AG04450 (cell line): ENCODE measurements at regions of chr20 and their contacts with region 1.

Region 1: GRCh38 chr20:17938871-17939619 is 29.5 kb downstream of the SNX5 start:
- DNase-seq: no peak
- H3K4me3 ChIP-seq: no peak overlapping the region
- H3K27ac ChIP-seq: peak overlapping the region; percentile 21
- H3K27me3 ChIP-seq: no peaks in the 10 kb centered on the region
- CTCF ChIP-seq: peak; percentile 98

Region 2: GRCh38 chr20:17298171-17298570 is 640.9 kb before region 1 on chr20:
- CTCF ChIA-PET with region 1: no interaction called
- POLR2A ChIA-PET with region 1: no interaction called
- DNase-seq: no peak
- H3K4me3 ChIP-seq: no peak overlapping the region
- H3K27ac ChIP-seq: no peak overlapping the region
- H3K27me3 ChIP-seq: no peaks in the 10 kb centered on the region
- CTCF ChIP-seq: no peak

Region 3: DNA sequence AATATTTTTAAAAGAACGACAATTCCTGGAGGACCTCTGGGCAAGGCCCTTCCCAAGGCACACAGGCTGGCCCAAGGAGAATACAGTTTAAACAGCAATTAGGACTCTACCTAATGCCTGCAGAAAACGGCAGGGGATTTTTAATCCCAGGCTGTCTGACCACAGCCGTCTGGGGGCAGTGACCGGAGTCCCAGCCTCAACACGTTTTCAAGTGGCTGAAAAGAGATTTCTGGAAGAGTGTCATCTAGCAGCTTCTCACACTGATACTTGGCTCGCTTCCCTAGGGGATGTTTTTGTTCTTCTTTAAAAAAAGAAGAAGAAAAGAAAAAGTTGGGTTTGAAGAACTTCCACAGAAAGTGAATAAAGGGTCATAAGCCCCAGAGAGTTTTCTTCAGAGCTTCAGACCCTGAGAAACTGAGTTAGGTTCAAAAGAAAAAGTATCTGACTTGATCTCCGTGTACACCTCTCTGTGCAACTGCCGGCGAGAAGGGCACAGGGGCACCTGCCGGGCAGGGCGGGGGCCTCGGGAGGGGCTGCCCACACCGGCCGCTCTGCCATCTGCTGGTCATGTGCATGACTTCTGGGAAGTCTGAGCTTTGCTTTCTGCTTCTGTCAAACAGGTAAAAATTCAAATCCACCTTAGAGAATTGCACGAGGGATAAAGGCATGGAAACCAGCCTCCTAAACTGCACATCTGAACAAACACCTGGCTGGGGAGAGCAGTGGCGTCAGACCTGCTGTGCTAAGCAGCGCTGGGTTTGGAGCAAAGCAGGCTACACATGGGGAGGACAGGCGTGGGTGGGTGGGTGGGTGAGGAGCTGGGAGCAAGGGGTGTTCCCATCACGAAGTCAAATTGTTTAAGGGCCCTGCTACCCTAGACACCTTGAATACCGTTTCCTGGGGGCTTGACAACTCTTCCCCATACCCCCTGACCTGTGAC is 290.0 kb before region 1 on chr20:
- CTCF ChIA-PET with region 1: interaction called, 15 read pairs
- POLR2A ChIA-PET with region 1: interaction called, 4 read pairs
- DNase-seq: no peak
- H3K4me3 ChIP-seq: no peak overlapping the region
- H3K27ac ChIP-seq: no peak overlapping the region
- H3K27me3 ChIP-seq: no peaks in the 10 kb centered on the region
- CTCF ChIP-seq: peak; percentile 35

Region 4: GRCh38 chr20:17666481-17666880 is 272.6 kb before region 1 on chr20:
- CTCF ChIA-PET with region 1: interaction called, 14 read pairs
- POLR2A ChIA-PET with region 1: interaction called, 4 read pairs
- DNase-seq: no peak
- H3K4me3 ChIP-seq: no peak overlapping the region
- H3K27ac ChIP-seq: no peak overlapping the region
- H3K27me3 ChIP-seq: no peaks in the 10 kb centered on the region
- CTCF ChIP-seq: no peak

Region 5: DNA sequence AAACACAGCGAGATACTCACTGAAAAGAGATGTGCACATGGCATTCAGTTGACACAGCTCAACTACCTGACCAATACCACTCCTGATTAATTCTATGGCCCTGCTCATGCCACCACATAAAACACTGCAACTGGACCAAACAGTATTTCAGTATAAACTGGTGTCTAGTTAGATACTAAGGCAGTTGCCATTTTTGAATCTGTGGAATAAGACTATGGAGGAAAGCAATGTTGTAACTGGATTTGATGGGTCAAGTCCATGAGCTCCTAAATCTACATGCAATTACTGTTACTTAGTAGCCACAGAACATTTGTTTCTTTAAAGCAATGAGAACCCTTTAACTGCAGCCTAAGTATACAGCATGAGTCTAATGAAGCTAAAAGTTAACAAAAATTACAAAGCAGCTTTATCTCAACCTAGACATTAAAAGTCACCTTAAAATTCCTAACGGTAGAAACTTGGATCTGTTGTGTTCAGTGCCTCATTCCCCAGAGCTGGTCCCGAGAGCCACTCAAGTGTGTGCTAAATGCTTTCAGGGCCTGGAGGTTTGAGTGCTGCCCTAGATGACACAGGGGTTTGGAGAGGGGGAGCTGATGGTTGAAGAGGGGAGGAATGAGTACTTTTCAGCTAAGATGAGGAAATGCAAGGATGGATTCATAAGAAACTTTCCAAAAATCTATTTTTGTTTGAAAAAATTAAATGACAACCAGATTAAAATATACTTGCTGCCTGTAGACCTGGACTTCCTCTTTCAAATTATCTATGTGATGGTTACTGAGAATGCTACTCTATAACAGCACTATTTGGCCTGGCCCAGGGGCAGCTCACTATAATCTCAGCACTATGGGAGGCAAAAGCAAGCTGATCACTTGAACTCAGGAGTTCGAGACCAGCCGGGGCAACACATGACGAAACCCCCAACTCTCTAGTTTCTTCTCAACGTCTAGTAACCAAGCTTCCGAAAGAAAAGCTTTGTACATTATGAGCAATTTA is 13.9 kb after region 1 on chr20:
- CTCF ChIA-PET with region 1: interaction called, 23 read pairs
- POLR2A ChIA-PET with region 1: interaction called, 5 read pairs
- DNase-seq: no peak
- H3K4me3 ChIP-seq: no peak overlapping the region
- H3K27ac ChIP-seq: no peak overlapping the region
- H3K27me3 ChIP-seq: no peaks in the 10 kb centered on the region
- CTCF ChIP-seq: no peak

Region 6: DNA sequence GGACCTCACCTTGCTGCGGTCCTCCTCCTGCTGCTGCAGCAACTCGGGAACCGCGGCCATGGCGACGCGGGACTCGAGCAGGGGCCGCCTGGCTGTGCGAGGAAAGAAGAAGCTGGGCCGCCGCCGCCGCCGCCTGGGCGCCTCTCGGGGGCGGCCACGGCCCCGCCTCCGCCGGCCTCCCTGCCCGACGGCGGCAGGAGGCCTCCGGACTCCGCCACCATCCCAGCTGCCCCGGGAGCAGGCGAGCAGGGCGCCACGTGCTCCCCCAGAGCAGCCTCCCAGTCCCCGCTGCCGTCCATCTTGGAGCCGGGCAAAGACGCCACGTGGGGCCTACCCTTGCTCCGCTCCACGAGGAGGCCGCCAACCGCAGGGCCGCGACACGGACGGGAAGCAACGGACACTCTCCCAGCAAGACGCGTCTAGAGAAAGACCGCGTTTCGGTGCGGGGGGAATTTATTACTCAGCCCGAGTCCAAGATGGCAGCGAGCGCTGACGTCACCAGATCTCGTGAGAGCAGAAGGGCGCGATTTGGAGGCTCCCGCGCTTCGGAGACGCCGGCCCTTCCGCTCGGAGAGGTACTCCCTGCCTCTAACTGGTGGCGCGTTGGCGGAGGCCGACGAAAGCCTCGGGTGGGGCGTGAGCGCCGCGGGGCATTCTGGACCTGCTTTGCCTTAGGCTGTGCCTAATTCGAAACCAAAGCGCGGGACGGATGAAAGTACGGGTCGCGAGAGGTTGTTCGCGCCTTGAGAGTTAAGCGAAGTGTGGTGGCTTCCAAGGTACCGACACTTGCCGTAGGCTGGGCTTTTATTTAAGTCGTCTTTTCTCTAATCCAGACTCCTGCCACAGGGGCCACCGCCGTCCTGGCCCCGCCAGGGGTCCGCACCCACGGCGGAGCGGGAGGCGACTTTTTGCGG is 29.6 kb after region 1 on chr20 and contains the starts of genes MGME1 and SNX5:
- CTCF ChIA-PET with region 1: interaction called, 16 read pairs
- POLR2A ChIA-PET with region 1: interaction called, 6 read pairs
- DNase-seq: peak; percentile 98
- H3K4me3 ChIP-seq: peak within 1 kb of the TSS; percentile 96
- H3K27ac ChIP-seq: peak within 1 kb of the TSS; percentile 100
- H3K27me3 ChIP-seq: no peaks in the 10 kb centered on the region
- CTCF ChIP-seq: no peak
- polyA plus RNA-seq, gene MGME1: 9.9 and 13.5 TPM in 2 replicates
- polyA plus RNA-seq, gene SNX5: 109 and 150 TPM in 2 replicates